Panc1 (cell line): ENCODE measurements at regions of chr10 and their contacts with region 1.

Region 1: DNA sequence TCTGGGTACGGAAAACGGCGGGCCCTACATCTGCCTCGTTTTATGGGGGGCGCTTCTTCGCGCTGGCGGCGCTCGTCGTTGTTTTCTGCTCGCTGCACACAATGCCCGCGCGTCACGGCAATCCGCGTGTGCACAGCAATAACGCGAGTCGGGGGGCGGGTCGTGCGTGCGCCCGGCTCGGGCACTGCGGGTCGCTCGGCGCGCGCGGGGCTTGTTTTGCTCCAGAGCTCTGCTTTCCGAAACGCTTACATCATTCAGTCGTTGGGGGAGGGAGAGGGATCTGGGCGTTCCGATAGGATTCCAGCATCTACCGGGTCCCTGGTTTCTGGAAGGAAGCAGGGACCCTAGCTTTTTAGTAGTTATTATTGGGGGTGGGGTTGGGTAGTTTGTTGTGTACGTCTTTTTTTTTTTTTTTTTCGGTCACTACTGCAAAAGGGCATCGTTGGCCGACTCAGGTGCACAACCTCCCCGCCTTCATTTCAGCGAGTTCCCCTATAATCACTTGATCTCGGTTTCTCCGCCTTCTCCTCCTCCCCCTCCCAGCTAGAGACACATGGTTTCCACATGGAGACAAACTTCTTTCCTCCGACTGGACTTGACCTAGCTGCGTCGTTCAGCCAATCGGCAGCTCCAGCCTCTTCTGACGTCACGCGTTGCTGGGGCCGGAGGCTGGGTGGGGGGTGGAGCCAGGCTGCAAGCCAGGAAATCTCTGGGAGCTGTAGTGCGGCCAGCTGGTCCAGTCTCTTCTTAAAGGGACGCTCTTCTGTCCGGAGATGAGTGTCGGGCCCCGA is 3.5 kb downstream of the MXI1 start:
- DNase-seq: peak; percentile 95
- ATAC-seq: peak; percentile 90
- H3K4me3 ChIP-seq: peak overlapping the region; percentile 70 to 82
- H3K27ac ChIP-seq: peak overlapping the region; percentile 58; the same call in 1 of the 2 replicates
- H3K4me1 ChIP-seq: peaks cover 4% of the 10 kb centered on the region; the same call in 1 of the 2 replicates
- H3K27me3 ChIP-seq: peaks cover 2% of the 10 kb centered on the region; the same call in 1 of the 2 replicates
- CTCF ChIP-seq: no peak; the same call in 1 of the 2 replicates

Region 2: GRCh38 chr10:109866168-109866994 is 344.5 kb before region 1 on chr10:
- CTCF ChIA-PET with region 1: interaction called, 12 read pairs
- POLR2A ChIA-PET with region 1: no interaction called
- in situ Hi-C with region 1: no loop called
- intact Hi-C with region 1: no loop called
- DNase-seq: no peak
- ATAC-seq: peak; percentile 83
- H3K4me3 ChIP-seq: no peak overlapping the region
- H3K27ac ChIP-seq: no peak overlapping the region
- H3K4me1 ChIP-seq: no peaks in the 10 kb centered on the region
- H3K27me3 ChIP-seq: no peaks in the 10 kb centered on the region
- CTCF ChIP-seq: peak; percentile 62

Region 3: GRCh38 chr10:110137142-110137545 is 73.7 kb before region 1 on chr10:
- CTCF ChIA-PET with region 1: interaction called, 12 read pairs
- POLR2A ChIA-PET with region 1: no interaction called
- in situ Hi-C with region 1: no loop called
- intact Hi-C with region 1: loop called (anchors 5 kb)
- DNase-seq: peak; percentile 59
- ATAC-seq: peak; percentile 84
- H3K4me3 ChIP-seq: no peak overlapping the region
- H3K27ac ChIP-seq: no peak overlapping the region
- H3K4me1 ChIP-seq: no peaks in the 10 kb centered on the region
- H3K27me3 ChIP-seq: no peaks in the 10 kb centered on the region
- CTCF ChIP-seq: peak; percentile 78; the same call in 1 of the 2 replicates

Region 4: DNA sequence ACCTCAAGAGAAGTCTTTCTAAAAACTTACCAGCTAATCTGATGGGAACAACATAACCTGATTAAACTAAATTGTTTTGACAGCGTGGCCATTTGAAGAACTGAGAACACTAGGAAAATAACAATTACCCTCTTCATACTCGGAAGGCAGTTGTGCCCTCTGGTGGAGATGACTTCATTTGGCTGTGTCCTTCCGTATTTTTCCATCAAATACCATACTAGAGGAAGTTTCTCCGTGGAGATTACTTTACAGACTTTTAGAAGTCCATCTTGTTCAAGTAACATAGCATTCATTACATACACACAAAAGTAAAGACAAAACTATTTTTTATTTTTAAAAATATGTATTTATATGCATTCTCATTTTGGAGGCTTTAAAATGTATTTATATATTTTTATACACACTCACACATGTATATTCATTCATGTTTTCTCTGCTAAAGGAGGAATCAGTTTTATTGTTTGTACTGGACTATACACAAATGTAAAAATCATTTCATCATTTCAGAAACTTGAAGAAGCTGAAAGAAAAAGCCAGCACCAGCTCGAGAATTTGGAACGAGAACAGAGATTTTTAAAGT is 68.6 kb after region 1 on chr10:
- CTCF ChIA-PET with region 1: no interaction called
- POLR2A ChIA-PET with region 1: no interaction called
- in situ Hi-C with region 1: no loop called
- intact Hi-C with region 1: loop called (anchors 5 kb)
- DNase-seq: peak; percentile 52
- ATAC-seq: peak; percentile 90
- H3K4me3 ChIP-seq: no peak overlapping the region
- H3K27ac ChIP-seq: no peak overlapping the region
- H3K4me1 ChIP-seq: no peaks in the 10 kb centered on the region
- H3K27me3 ChIP-seq: no peaks in the 10 kb centered on the region
- CTCF ChIP-seq: peak; percentile 80

Region 5: DNA sequence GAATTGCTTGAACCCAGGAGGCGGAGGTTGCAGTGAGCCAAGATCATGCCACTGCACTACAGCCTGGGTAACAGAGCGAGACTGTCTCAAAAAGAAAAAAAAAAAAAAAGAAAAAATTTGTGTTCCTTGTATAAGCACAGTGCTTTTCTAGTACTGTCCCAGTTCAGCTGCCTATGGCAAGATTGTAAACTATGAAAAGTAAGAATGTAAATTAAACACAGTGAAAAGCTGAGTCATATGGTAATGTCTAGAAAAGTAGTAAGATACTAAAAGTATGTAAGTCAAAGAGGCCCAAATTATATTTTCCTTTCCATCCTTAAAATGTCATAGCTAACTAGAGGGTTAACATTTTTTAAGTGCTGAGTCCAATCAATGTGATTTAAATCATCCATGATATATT is 476.1 kb after region 1 on chr10:
- CTCF ChIA-PET with region 1: no interaction called
- POLR2A ChIA-PET with region 1: no interaction called
- in situ Hi-C with region 1: no loop called
- intact Hi-C with region 1: no loop called
- DNase-seq: no peak
- ATAC-seq: no peak
- H3K4me3 ChIP-seq: no peak overlapping the region
- H3K27ac ChIP-seq: no peak overlapping the region
- H3K4me1 ChIP-seq: no peaks in the 10 kb centered on the region
- H3K27me3 ChIP-seq: peaks cover 19% of the 10 kb centered on the region
- CTCF ChIP-seq: no peak

Region 6: GRCh38 chr10:111275091-111275490 is 1064.2 kb after region 1 on chr10:
- CTCF ChIA-PET with region 1: no interaction called
- POLR2A ChIA-PET with region 1: interaction called, 32 read pairs
- in situ Hi-C with region 1: no loop called
- intact Hi-C with region 1: no loop called
- DNase-seq: no peak
- ATAC-seq: no peak
- H3K4me3 ChIP-seq: no peak overlapping the region
- H3K27ac ChIP-seq: no peak overlapping the region
- H3K4me1 ChIP-seq: no peaks in the 10 kb centered on the region
- H3K27me3 ChIP-seq: 0 out of 2 replicates have a peak, but pooled peaks cover 3% of the 10 kb centered on the region
- CTCF ChIP-seq: no peak